Heart left ventricle (tissue), 16 donors: ENCODE measurements at regions of chr4 and their contacts with region 1.

Region 1: DNA sequence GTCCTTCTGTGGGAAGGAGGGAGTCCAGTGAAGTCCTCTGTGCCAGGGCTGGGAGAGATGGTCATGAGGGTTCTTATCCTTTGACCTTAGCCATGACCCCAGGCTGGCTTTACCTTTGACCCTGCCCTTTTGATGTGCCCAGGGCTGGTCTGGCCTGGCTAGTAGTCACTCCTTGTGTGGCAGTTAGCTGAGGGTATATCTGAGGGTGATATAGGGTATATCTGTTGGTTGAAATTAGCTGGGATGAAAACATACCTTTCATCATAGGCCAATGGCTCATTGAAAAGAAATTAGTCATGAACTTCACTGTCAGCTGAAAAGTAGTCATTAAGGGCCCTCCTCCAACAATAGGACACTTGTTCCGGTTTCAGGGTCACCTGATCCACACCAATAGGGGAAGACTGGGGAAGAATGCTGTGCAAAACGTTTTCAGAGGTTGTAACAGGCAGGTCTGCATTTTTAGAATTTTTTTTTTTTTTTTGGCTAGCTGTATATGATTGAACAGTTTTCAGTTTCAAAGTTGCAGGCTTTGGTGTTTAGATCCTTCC is 74.6 kb upstream of the STOX2 start:
- DNase-seq: no peak
- ATAC-seq: peak in 3 of 4 donors; percentile 21 to 38 (median 23)
- H3K4me3 ChIP-seq: no peak overlapping the region
- H3K27ac ChIP-seq: peak overlapping the region in 10 of 12 donors; percentile 8 to 69 (median 44)
- H3K4me1 ChIP-seq: peaks cover 0 to 55% (median 23%) of the 10 kb centered on the region in 12 donors
- H3K27me3 ChIP-seq: no peaks in the 10 kb centered on the region
- CTCF ChIP-seq: no peak
- POLR2A ChIP-seq: no peak

Region 2: DNA sequence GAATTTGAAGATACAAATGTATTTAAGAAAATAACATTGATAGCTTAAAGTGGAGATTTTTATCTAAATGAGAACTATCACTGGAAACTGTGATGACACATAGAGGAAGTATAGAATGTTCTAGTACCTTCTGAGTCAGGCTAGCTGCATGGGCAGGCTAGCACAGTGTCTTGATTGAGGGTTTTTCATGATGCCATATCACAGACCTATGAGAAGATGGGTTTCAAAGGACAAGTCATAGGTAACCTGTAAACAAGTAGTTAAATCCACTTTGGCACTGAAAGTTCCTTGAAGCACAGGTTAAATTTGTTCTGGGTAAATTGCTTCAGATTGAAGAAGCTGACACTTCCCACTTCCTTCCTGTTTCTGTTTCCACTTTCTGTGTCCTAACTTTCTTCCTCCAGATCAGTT is 434.3 kb before region 1 on chr4:
- intact Hi-C with region 1: no loop called
- DNase-seq: no peak
- ATAC-seq: no peak
- H3K4me3 ChIP-seq: no peak overlapping the region
- H3K27ac ChIP-seq: no peak overlapping the region
- H3K4me1 ChIP-seq: peaks cover 0 to 42% (median 6%) of the 10 kb centered on the region in 12 donors
- H3K27me3 ChIP-seq: peaks cover 0 to 15% (median under 1%) of the 10 kb centered on the region in 9 donors
- CTCF ChIP-seq: no peak
- POLR2A ChIP-seq: no peak

Region 3: GRCh38 chr4:183765251-183765911 is 65.1 kb before region 1 on chr4:
- intact Hi-C with region 1: loop called in 2 of 10 experiments (anchors 2 to 10 kb)
- DNase-seq: peak in 4 of 5 donors; percentile 59 to 74 (median 64)
- ATAC-seq: peak in 3 of 4 donors; percentile 53 to 90 (median 74)
- H3K4me3 ChIP-seq: peak overlapping the region in 11 of 12 donors; percentile 1 to 57 (median 42)
- H3K27ac ChIP-seq: peak overlapping the region; percentile 65 to 88 (median 82)
- H3K4me1 ChIP-seq: peaks cover 0 to 24% (median 7%) of the 10 kb centered on the region in 12 donors
- H3K27me3 ChIP-seq: no peaks in the 10 kb centered on the region
- CTCF ChIP-seq: no peak
- POLR2A ChIP-seq: no peak